B cell (primary cell): ENCODE measurements at regions of chr4 and their contacts with region 1.

Region 1: DNA sequence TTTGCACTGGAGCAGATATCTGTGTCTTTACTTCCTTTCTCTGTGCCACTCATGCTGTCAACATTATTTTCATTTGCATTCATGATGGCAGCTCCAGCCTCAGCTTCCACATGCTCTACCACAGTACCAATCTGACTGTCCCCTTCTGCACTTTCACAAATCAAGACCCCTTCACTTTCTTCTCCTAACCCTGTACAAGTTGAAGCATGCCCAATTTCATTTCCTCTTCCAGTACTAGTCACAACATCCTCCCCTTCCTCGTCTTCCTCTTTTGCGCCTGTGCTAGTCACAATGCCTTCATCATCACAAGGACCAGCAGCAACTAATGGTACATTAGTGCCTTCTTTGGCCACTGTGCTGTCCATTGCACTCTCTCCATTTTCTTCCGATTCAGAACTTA is 26.5 kb downstream of the BOD1L1 start:
- DNase-seq: peak; percentile 75
- ATAC-seq: peak; percentile 92
- H3K4me3 ChIP-seq: peak overlapping the region in 1 of 5 experiments; percentile 3
- H3K4me3 Mint-ChIP-seq: peak overlapping the region; percentile 57
- H3K27ac ChIP-seq: peak overlapping the region; percentile 50 to 79
- H3K27ac Mint-ChIP-seq: peak overlapping the region; percentile 76
- H3K4me1 ChIP-seq: peaks cover 31 to 33% of the 10 kb centered on the region in 2 donors
- H3K4me1 Mint-ChIP-seq: peaks cover 40% of the 10 kb centered on the region
- H3K27me3 ChIP-seq: no peaks in the 10 kb centered on the region
- H3K27me3 Mint-ChIP-seq: no peaks in the 10 kb centered on the region
- CTCF ChIP-seq: no peak

Region 2: DNA sequence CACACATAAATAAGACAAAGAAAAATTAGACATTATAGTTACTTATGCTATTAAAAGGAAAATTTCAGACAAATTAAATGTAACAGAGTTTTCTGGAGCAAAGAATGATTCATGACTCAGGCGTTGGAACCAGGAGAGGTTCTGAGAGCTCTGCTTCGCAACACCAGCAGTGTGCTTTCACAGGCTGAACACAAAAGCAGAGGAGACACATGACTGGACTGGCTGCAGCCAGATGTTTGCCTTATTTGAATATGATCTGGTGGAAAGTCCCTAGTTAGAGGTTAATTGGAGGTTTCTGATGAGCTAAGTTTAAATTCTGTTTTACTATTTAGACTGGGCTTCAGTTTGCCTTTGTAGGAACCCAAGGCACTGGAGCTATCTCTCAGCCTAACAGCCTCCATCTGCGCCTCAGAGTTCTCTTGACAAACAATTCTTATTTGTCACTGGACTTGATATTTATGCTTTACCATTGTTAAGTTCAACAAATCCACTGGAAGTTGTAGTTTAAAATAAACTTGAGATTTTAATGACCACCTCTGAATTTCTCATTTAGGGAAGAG is 10.3 kb after region 1 on chr4:
- CTCF ChIA-PET with region 1: no interaction called
- POLR2A ChIA-PET with region 1: interaction called, 4 read pairs
- intact Hi-C with region 1: loop called (anchors 1 kb)
- DNase-seq: peak; percentile 83
- ATAC-seq: peak; percentile 92
- H3K4me3 ChIP-seq: peak overlapping the region in 1 of 5 experiments; percentile 47
- H3K4me3 Mint-ChIP-seq: peak overlapping the region; percentile 71
- H3K27ac ChIP-seq: peak overlapping the region; percentile 84 to 92
- H3K27ac Mint-ChIP-seq: peak overlapping the region; percentile 88
- H3K4me1 ChIP-seq: peaks cover 48 to 55% of the 10 kb centered on the region in 2 donors
- H3K4me1 Mint-ChIP-seq: peaks cover 54% of the 10 kb centered on the region
- H3K27me3 ChIP-seq: no peaks in the 10 kb centered on the region
- H3K27me3 Mint-ChIP-seq: no peaks in the 10 kb centered on the region
- CTCF ChIP-seq: no peak